Ovary (tissue), 10 donors: ENCODE measurements at regions of chr16 and their contacts with region 1.

Region 1: DNA sequence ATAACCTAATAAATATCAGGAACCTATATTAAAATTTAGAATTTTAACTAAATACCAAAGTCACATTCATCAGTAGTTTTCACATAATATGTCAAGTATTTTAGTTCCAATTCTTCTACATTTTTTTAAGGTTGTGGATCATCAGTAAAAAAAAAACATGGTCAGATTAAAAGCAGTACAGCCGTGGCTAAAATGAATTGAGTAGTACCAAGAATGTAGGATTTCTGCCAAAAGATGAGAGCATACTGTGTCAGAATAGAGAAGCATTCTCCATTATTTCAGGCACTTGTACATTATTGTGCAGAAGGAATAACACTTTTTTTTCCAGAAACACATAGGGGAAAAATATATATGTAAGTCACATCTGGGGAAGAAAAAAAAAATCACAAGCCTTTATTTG is 1176.1 kb downstream of the CDH11 start:
- DNase-seq: no peak
- H3K4me3 ChIP-seq: no peak overlapping the region
- H3K27ac ChIP-seq: no peak overlapping the region
- H3K4me1 ChIP-seq: no peaks in the 10 kb centered on the region
- H3K27me3 ChIP-seq: no peaks in the 10 kb centered on the region
- CTCF ChIP-seq: no peak
- EP300 ChIP-seq: no peak
- POLR2A ChIP-seq: no peak

Region 2: GRCh38 chr16:63752347-63752746 is 193.5 kb before region 1 on chr16:
- intact Hi-C with region 1: loop called in 1 of 4 experiments (anchors 10 kb)
- DNase-seq: no peak
- H3K4me3 ChIP-seq: no peak overlapping the region
- H3K27ac ChIP-seq: no peak overlapping the region
- H3K4me1 ChIP-seq: no peaks in the 10 kb centered on the region
- H3K27me3 ChIP-seq: no peaks in the 10 kb centered on the region
- CTCF ChIP-seq: no peak
- EP300 ChIP-seq: no peak
- POLR2A ChIP-seq: no peak